B cell (primary cell): ENCODE measurements at regions of chr2 and their contacts with region 1.

Region 1: DNA sequence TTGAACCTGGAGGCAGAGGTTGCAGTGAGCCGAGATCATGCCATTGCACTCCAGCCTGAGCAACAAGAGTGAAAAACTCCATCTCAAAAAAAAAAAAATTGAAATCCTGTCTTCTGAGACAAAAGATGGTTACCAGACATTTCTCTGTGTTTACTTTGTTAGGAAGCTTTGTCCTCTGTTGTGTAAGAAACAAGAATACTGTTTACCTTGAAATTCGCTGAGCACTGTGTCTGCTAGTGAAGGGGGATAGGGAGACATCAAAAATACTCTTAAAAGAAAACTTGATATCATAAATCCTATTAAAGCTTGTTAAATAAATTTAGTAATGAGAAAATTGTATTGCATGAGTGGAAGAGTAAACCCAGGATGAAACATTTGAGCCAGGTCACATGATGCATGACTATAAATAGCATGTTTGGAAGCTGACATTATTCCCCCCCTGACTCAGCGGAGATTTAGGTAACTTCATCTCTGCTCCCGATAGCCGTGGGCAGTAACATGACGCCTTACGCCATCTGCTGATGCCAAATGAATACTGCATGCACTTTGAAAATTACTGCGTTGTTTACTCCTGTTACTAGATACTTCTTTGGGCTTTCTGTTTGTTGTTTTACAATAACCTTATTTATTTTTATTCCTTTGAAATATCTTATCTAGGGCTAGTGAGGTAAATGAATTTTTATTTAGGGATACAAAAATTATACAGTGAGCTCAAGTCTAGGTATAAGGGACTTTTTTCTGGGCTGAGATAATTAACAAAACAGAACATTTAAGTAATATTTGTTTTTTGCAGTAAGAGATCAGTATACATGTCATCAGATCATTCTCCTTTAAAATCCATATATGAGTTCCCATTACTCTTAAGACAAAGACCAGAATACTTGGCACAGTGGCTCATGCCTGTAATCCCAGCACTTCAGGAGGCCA is 134.9 kb downstream of the MAP3K20 start:
- DNase-seq: peak; percentile 73
- ATAC-seq: peak; percentile 76
- H3K4me3 ChIP-seq: no peak overlapping the region
- H3K4me3 Mint-ChIP-seq: no peak overlapping the region
- H3K27ac ChIP-seq: no peak overlapping the region
- H3K27ac Mint-ChIP-seq: no peak overlapping the region
- H3K4me1 ChIP-seq: no peaks in the 10 kb centered on the region
- H3K4me1 Mint-ChIP-seq: no peaks in the 10 kb centered on the region
- H3K27me3 ChIP-seq: no peaks in the 10 kb centered on the region
- H3K27me3 Mint-ChIP-seq: no peaks in the 10 kb centered on the region
- CTCF ChIP-seq: peak; percentile 89

Region 2: DNA sequence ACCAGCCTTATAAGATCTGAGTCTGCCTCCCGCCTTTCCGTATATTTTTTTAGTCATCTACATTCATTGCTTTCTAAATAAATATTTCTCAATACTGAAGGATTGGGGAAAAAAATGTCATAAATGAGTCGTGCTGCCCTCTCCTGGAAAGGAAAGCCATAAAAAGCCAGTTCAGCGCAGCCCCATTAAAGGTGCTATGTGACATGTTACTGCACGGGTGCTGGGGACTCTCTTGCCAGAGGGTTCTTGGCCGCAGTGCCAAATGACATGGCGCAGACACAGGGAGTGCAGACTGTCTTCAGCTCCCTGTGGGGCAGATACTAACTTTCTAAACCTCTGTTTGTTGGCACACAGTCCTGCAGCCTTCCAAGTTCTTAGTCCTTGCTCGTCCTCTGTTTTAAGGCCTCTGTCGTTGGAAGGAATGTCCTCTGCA is 188.6 kb before region 1 on chr2:
- CTCF ChIA-PET with region 1: interaction called, 303 read pairs
- POLR2A ChIA-PET with region 1: no interaction called
- intact Hi-C with region 1: loop called (anchors 1 kb)
- DNase-seq: no peak
- ATAC-seq: no peak
- H3K4me3 ChIP-seq: no peak overlapping the region
- H3K4me3 Mint-ChIP-seq: no peak overlapping the region
- H3K27ac ChIP-seq: no peak overlapping the region
- H3K27ac Mint-ChIP-seq: no peak overlapping the region
- H3K4me1 ChIP-seq: no peaks in the 10 kb centered on the region
- H3K4me1 Mint-ChIP-seq: no peaks in the 10 kb centered on the region
- H3K27me3 ChIP-seq: peaks cover 0 to 3% (median 0%) of the 10 kb centered on the region in 4 experiments
- H3K27me3 Mint-ChIP-seq: peaks cover 9% of the 10 kb centered on the region
- CTCF ChIP-seq: no peak

Region 3: DNA sequence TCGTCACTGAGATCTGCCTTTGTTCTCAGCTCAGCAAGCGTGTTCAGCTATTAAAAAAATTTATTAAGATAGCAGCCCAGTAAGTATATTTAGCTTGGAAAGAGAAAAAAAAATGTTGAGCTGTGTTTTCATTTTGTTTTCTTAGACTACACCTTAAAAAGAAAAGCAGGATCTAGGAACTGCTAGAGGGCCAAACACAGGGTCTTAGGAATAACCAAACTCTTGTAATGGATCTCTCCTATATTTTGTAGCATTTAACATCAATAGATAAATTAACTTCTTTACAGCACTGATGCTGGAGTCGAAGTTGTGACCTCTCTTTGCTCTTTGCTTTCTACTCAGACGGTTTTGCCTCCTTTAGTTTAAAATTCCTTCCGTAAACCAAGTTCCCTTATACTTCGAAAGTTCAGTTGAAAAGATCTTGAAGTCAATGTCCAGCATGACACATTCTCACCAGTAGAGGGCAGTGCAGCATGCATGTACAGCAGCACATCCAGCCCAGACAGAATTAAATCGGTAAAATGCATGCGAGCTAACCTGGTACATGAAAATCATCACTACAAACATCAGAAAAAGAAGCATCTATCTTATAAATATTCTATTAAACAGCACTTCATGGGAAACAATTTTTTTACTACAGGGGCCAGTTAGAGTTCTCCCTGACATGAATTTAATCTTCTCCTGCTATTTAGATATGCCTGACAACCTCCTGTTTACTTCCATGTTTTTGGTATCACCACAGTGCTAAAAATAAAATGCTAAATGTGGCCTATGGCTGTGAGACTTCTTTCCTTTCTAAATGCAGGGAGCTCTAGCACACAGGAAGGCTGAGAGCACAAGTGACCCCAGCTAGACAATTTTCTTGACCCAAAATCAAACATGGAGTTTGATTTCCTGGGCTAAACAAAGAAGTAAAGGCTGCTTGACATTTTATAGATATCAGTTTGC is 183.1 kb before region 1 on chr2:
- CTCF ChIA-PET with region 1: interaction called, 303 read pairs
- POLR2A ChIA-PET with region 1: no interaction called
- intact Hi-C with region 1: loop called (anchors 1 kb)
- DNase-seq: peak; percentile 81
- ATAC-seq: peak; percentile 74
- H3K4me3 ChIP-seq: no peak overlapping the region
- H3K4me3 Mint-ChIP-seq: no peak overlapping the region
- H3K27ac ChIP-seq: no peak overlapping the region
- H3K27ac Mint-ChIP-seq: no peak overlapping the region
- H3K4me1 ChIP-seq: peaks cover 4 to 8% of the 10 kb centered on the region in 2 donors
- H3K4me1 Mint-ChIP-seq: peaks cover 1% of the 10 kb centered on the region
- H3K27me3 ChIP-seq: peaks cover 0 to 3% (median 0%) of the 10 kb centered on the region in 4 experiments
- H3K27me3 Mint-ChIP-seq: peaks cover 16% of the 10 kb centered on the region
- CTCF ChIP-seq: peak; percentile 94

Region 4: DNA sequence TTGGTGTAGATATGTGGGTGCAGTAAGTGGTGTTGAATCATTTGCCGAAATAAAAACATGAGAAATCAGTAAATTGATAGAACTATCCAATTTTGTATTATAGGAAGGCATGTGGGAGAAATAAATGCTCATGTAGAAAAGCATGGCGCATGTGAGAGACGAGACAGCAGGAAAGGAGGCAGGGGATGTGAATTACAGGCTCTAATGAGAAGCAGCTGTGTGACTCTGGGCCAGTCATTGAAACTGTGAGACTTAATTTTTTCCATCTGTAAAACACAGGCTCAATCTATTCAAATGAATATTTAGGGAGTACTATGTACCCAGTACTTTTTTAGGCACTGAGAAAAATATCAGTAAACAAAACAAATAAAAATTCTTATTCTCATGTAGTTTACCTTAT is 177.4 kb before region 1 on chr2:
- CTCF ChIA-PET with region 1: interaction called, 303 read pairs
- POLR2A ChIA-PET with region 1: no interaction called
- intact Hi-C with region 1: no loop called
- DNase-seq: no peak
- ATAC-seq: no peak
- H3K4me3 ChIP-seq: no peak overlapping the region
- H3K4me3 Mint-ChIP-seq: no peak overlapping the region
- H3K27ac ChIP-seq: no peak overlapping the region
- H3K27ac Mint-ChIP-seq: no peak overlapping the region
- H3K4me1 ChIP-seq: no peaks in the 10 kb centered on the region
- H3K4me1 Mint-ChIP-seq: peaks cover 5% of the 10 kb centered on the region
- H3K27me3 ChIP-seq: no peaks in the 10 kb centered on the region
- H3K27me3 Mint-ChIP-seq: peaks cover 3% of the 10 kb centered on the region
- CTCF ChIP-seq: no peak

Region 5: GRCh38 chr2:173075781-173076580 is 134.6 kb before region 1 on chr2 and contains the start of gene MAP3K20:
- CTCF ChIA-PET with region 1: no interaction called
- POLR2A ChIA-PET with region 1: no interaction called
- intact Hi-C with region 1: loop called (anchors 5 kb)
- DNase-seq: peak; percentile 76
- ATAC-seq: peak; percentile 77
- H3K4me3 ChIP-seq: peak within 1 kb of the TSS; percentile 49 to 87 (median 74)
- H3K4me3 Mint-ChIP-seq: peak within 1 kb of the TSS; percentile 95
- H3K27ac ChIP-seq: peak within 1 kb of the TSS in 1 of 2 donors; percentile 56
- H3K27ac Mint-ChIP-seq: peak within 1 kb of the TSS; percentile 79
- H3K4me1 ChIP-seq: peaks cover 9 to 11% of the 10 kb centered on the region in 2 donors
- H3K4me1 Mint-ChIP-seq: peaks cover 16% of the 10 kb centered on the region
- H3K27me3 ChIP-seq: peaks cover 0 to 4% (median 0%) of the 10 kb centered on the region in 4 experiments
- H3K27me3 Mint-ChIP-seq: peaks cover 8% of the 10 kb centered on the region
- CTCF ChIP-seq: no peak
- total RNA-seq, gene MAP3K20: 7.1 and 9.1 TPM in 2 replicates

Region 6: DNA sequence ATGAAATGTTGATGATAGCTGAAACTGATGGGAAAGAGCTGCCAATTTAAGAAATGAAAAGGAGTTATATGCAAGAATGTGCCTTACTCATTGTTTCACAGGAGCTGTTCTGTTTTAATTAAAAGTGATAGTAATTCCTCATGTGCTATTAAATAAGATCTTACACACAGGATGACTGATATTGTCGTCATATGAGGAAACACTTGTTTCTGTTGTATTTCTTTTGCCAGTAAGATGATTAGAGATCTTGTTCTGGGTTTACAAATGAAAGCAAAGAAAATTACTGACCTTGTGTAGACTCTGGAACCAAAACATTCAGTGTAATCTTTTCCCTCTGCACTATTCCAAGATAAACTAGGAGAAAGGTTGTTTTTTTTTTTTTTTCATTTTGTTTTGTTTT is 11.2 kb before region 1 on chr2:
- CTCF ChIA-PET with region 1: interaction called, 19 read pairs
- POLR2A ChIA-PET with region 1: no interaction called
- intact Hi-C with region 1: no loop called
- DNase-seq: no peak
- ATAC-seq: no peak
- H3K4me3 ChIP-seq: no peak overlapping the region
- H3K4me3 Mint-ChIP-seq: no peak overlapping the region
- H3K27ac ChIP-seq: no peak overlapping the region
- H3K27ac Mint-ChIP-seq: no peak overlapping the region
- H3K4me1 ChIP-seq: no peaks in the 10 kb centered on the region
- H3K4me1 Mint-ChIP-seq: no peaks in the 10 kb centered on the region
- H3K27me3 ChIP-seq: no peaks in the 10 kb centered on the region
- H3K27me3 Mint-ChIP-seq: no peaks in the 10 kb centered on the region
- CTCF ChIP-seq: no peak

Region 7: GRCh38 chr2:173239644-173240043 is 29.1 kb after region 1 on chr2:
- CTCF ChIA-PET with region 1: no interaction called
- POLR2A ChIA-PET with region 1: no interaction called
- intact Hi-C with region 1: no loop called
- DNase-seq: no peak
- ATAC-seq: no peak
- H3K4me3 ChIP-seq: no peak overlapping the region
- H3K4me3 Mint-ChIP-seq: no peak overlapping the region
- H3K27ac ChIP-seq: no peak overlapping the region
- H3K27ac Mint-ChIP-seq: no peak overlapping the region
- H3K4me1 ChIP-seq: no peaks in the 10 kb centered on the region
- H3K4me1 Mint-ChIP-seq: no peaks in the 10 kb centered on the region
- H3K27me3 ChIP-seq: no peaks in the 10 kb centered on the region
- H3K27me3 Mint-ChIP-seq: no peaks in the 10 kb centered on the region
- CTCF ChIP-seq: no peak